B cell (primary cell): ENCODE measurements at regions of chr5 and their contacts with region 1.

Region 1: GRCh38 chr5:142922223-142922952 is 152.2 kb downstream of the ARHGAP26 start:
- DNase-seq: peak; percentile 43
- ATAC-seq: peak; percentile 60
- H3K4me3 ChIP-seq: no peak overlapping the region
- H3K4me3 Mint-ChIP-seq: no peak overlapping the region
- H3K27ac ChIP-seq: no peak overlapping the region
- H3K27ac Mint-ChIP-seq: no peak overlapping the region
- H3K4me1 ChIP-seq: no peaks in the 10 kb centered on the region
- H3K4me1 Mint-ChIP-seq: peaks cover 7% of the 10 kb centered on the region
- H3K27me3 ChIP-seq: no peaks in the 10 kb centered on the region
- H3K27me3 Mint-ChIP-seq: no peaks in the 10 kb centered on the region
- CTCF ChIP-seq: peak; percentile 55

Region 2: DNA sequence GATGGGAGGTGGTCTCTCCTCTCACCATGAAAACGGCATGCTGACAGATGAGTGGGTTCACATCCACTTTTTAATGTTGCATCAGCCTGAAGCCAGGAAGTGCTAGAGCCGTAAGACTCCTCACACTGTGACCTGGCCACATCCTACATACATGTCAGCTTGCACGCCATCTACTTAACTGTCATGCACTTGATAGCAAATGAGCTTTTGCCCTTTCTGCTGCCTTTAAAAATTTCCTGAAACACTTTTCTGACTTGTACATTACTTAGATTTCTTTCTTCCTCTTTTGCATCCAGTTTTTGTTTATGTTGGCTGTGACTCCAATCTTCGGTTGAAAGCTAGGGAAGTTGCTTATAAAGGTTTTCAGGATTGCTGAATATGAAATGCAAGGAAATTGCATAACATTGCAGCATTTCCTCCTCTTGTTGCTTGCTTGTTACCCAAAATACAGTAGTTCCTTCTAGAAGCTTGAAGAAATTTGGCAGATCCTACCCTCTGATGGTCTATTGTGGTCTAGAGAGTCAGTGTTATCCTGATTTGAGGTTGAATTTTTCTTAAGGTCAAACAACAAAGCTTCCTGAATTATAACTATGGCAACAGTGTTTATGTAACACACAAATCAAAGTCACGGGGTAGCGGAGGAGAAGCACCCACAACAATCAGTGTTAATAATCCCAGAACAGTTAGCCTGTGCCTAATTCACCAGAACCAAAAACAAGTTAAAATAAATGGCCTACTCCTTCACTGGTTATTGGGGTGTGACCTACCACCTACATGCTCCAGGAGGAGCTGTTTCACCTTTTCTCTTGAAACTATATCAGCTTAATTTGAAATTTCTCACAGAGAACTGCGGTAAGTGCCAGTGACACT is 80.3 kb after region 1 on chr5:
- CTCF ChIA-PET with region 1: interaction called, 30 read pairs
- POLR2A ChIA-PET with region 1: no interaction called
- intact Hi-C with region 1: no loop called
- DNase-seq: peak; percentile 76
- ATAC-seq: peak; percentile 72
- H3K4me3 ChIP-seq: peak overlapping the region in 1 of 5 experiments; percentile 40
- H3K4me3 Mint-ChIP-seq: peak overlapping the region; percentile 54
- H3K27ac ChIP-seq: peak overlapping the region; percentile 81 to 94
- H3K27ac Mint-ChIP-seq: peak overlapping the region; percentile 92
- H3K4me1 ChIP-seq: peaks cover 59 to 62% of the 10 kb centered on the region in 2 donors
- H3K4me1 Mint-ChIP-seq: peaks cover 86% of the 10 kb centered on the region
- H3K27me3 ChIP-seq: no peaks in the 10 kb centered on the region
- H3K27me3 Mint-ChIP-seq: no peaks in the 10 kb centered on the region
- CTCF ChIP-seq: peak; percentile 74

Region 3: GRCh38 chr5:143161893-143162540 is 239.6 kb after region 1 on chr5:
- CTCF ChIA-PET with region 1: no interaction called
- POLR2A ChIA-PET with region 1: no interaction called
- intact Hi-C with region 1: no loop called
- DNase-seq: no peak
- ATAC-seq: no peak
- H3K4me3 ChIP-seq: no peak overlapping the region
- H3K4me3 Mint-ChIP-seq: no peak overlapping the region
- H3K27ac ChIP-seq: no peak overlapping the region
- H3K27ac Mint-ChIP-seq: no peak overlapping the region
- H3K4me1 ChIP-seq: peaks cover 5 to 7% of the 10 kb centered on the region in 2 donors
- H3K4me1 Mint-ChIP-seq: peaks cover 11% of the 10 kb centered on the region
- H3K27me3 ChIP-seq: no peaks in the 10 kb centered on the region
- H3K27me3 Mint-ChIP-seq: no peaks in the 10 kb centered on the region
- CTCF ChIP-seq: no peak

Region 4: GRCh38 chr5:143222287-143223231 is 300.2 kb after region 1 on chr5:
- CTCF ChIA-PET with region 1: no interaction called
- POLR2A ChIA-PET with region 1: no interaction called
- intact Hi-C with region 1: loop called (anchors 5 kb)
- DNase-seq: peak; percentile 79
- ATAC-seq: peak; percentile 89
- H3K4me3 ChIP-seq: peak overlapping the region in 4 of 5 experiments; percentile 9 to 52 (median 32)
- H3K4me3 Mint-ChIP-seq: peak overlapping the region; percentile 80
- H3K27ac ChIP-seq: peak overlapping the region; percentile 61 to 81
- H3K27ac Mint-ChIP-seq: peak overlapping the region; percentile 82
- H3K4me1 ChIP-seq: peaks cover 30 to 34% of the 10 kb centered on the region in 2 donors
- H3K4me1 Mint-ChIP-seq: peaks cover 39% of the 10 kb centered on the region
- H3K27me3 ChIP-seq: no peaks in the 10 kb centered on the region
- H3K27me3 Mint-ChIP-seq: no peaks in the 10 kb centered on the region
- CTCF ChIP-seq: no peak

Region 5: GRCh38 chr5:143564417-143564816 is 642.0 kb after region 1 on chr5:
- CTCF ChIA-PET with region 1: no interaction called
- POLR2A ChIA-PET with region 1: no interaction called
- intact Hi-C with region 1: loop called (anchors 5 kb)
- DNase-seq: peak; percentile 66
- ATAC-seq: peak; percentile 92
- H3K4me3 ChIP-seq: no peak overlapping the region
- H3K4me3 Mint-ChIP-seq: no peak overlapping the region
- H3K27ac ChIP-seq: no peak overlapping the region
- H3K27ac Mint-ChIP-seq: no peak overlapping the region
- H3K4me1 ChIP-seq: peaks cover 4 to 13% of the 10 kb centered on the region in 2 donors
- H3K4me1 Mint-ChIP-seq: peaks cover 21% of the 10 kb centered on the region
- H3K27me3 ChIP-seq: no peaks in the 10 kb centered on the region
- H3K27me3 Mint-ChIP-seq: no peaks in the 10 kb centered on the region
- CTCF ChIP-seq: no peak

Region 6: DNA sequence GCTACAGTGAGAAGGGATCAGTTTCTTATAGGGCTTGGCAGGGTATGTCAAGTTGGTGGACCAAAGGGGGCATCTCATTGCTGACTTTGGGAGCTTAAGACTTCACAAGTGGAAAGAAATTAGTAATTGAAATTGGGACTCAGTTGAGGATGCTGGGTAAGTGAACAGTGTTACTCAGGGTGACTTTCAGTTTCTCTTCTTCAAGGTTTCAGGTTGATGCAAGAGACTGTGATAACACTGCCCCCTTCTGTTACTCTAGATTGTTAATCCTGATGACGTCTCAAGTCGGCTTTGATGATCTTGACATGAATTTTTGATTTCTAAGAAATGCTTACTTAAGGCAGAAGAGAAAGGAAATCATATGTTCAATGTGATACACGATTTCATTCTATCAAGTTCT is 1269.6 kb after region 1 on chr5:
- CTCF ChIA-PET with region 1: interaction called, 11 read pairs
- POLR2A ChIA-PET with region 1: no interaction called
- intact Hi-C with region 1: loop called (anchors 5 kb)
- DNase-seq: peak; percentile 86
- ATAC-seq: peak; percentile 76
- H3K4me3 ChIP-seq: peak overlapping the region in 2 of 5 experiments; percentile 8 to 19
- H3K4me3 Mint-ChIP-seq: no peak overlapping the region
- H3K27ac ChIP-seq: peak overlapping the region; percentile 54 to 70
- H3K27ac Mint-ChIP-seq: no peak overlapping the region
- H3K4me1 ChIP-seq: peaks cover 46% of the 10 kb centered on the region in 2 donors
- H3K4me1 Mint-ChIP-seq: peaks cover 40% of the 10 kb centered on the region
- H3K27me3 ChIP-seq: no peaks in the 10 kb centered on the region
- H3K27me3 Mint-ChIP-seq: no peaks in the 10 kb centered on the region
- CTCF ChIP-seq: peak; percentile 84